ENCODE measurements at regions of chr1 and their contacts with region 1.

Region 1: DNA sequence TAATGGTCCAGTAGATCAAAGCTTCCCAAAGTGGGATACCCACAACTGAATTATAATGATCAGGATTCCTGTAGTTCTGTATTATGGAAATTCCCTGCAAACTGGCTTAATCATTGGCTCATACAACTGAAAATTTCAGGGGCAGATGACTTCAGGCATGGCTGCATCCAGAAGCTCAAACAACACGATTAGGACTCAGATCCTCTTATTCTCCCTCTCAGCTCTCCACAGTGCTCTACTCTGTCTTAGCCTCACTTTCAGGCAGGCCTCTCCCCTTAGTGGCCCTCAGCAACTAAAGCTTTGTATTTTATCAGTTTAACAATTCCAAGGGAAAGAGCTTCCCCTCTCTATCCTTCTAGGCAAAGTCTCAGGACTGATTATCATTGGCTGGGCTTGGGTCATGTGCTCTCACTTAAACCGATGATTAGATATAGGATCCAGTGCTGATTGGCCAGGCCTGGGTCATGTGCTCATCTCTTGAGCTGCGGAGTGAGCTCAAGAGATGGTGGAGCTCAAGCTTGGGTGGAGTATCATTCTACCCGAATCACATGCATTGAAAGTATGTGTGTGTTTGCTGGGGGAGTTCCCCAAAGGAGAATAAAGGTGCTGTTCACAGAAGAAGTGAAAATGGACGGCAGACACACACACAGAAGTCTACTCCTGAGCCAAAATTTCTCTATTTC is 57.9 kb upstream of the RUNX3 start:
- DNase-seq: no peak
- ATAC-seq: no peak
- H3K4me3 Mint-ChIP-seq: no peak overlapping the region
- H3K27ac Mint-ChIP-seq: peak overlapping the region; percentile 31
- H3K4me1 Mint-ChIP-seq: peaks cover 98% of the 10 kb centered on the region
- H3K27me3 Mint-ChIP-seq: no peaks in the 10 kb centered on the region

Region 2: GRCh38 chr1:24793447-24794131 is 194.4 kb before region 1 on chr1:
- CTCF ChIA-PET with region 1: no interaction called
- POLR2A ChIA-PET with region 1: no interaction called
- DNase-seq: no peak
- ATAC-seq: no peak
- H3K4me3 Mint-ChIP-seq: no peak overlapping the region
- H3K27ac Mint-ChIP-seq: no peak overlapping the region
- H3K4me1 Mint-ChIP-seq: no peaks in the 10 kb centered on the region
- H3K27me3 Mint-ChIP-seq: peaks cover 7% of the 10 kb centered on the region

Region 3: DNA sequence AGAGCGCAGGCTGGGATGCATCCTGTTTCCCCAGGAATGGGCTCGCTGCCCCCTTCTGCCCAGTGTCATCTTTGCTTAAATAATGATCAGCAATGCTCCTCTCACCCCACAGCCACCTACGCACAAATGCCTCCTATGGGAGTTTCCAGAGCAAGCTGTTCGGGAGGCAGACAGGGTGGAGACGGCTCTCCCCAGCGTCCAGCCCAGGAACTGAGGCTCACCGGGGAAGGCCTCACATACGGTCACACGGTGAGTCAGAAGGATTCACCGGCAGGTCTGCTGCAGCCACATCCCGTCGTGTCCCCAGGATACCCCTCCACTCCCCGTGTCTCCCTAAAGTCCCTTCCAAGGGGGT is 17.6 kb before region 1 on chr1:
- CTCF ChIA-PET with region 1: interaction called, 77 read pairs
- POLR2A ChIA-PET with region 1: interaction called, 106 read pairs
- DNase-seq: no peak
- ATAC-seq: no peak
- H3K4me3 Mint-ChIP-seq: peak overlapping the region; percentile 66
- H3K27ac Mint-ChIP-seq: peak overlapping the region; percentile 90
- H3K4me1 Mint-ChIP-seq: peaks cover 87% of the 10 kb centered on the region
- H3K27me3 Mint-ChIP-seq: no peaks in the 10 kb centered on the region

Region 4: DNA sequence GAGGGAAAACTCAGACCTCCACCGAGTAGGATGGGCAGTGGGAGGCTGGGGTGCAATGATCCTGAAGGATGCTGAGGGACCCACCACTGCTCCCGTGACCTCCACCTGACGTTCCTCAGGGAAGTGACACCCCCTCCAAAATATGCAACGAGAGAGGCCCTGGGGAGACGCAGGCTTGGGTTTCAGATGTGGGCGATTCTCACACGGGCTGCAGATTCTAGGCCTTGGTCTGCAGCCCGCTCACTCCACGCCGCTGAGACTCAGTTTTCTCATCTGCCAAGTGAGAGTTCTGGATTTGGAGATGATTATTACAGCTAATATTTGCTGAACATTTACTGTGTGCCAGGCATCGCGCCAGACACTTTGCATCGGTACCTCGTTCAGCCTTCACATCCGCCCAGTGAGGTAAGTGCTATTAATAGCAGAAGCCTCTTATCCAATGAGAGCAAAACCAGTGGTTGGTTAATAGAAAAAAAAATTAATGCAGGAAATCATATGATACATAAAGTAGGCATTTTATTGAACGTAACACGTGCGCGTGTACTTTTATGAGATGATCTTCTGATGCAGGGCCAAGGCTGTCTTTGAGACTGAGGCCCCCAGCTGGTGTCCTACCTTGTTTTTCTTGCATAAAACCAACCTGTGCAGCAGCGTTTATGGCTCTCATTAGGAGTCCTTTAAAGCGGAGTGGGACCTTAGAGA is 44.1 kb after region 1 on chr1:
- CTCF ChIA-PET with region 1: interaction called, 136 read pairs
- POLR2A ChIA-PET with region 1: interaction called, 9 read pairs
- DNase-seq: peak; percentile 82
- ATAC-seq: peak; percentile 32
- H3K4me3 Mint-ChIP-seq: peak overlapping the region; percentile 65
- H3K27ac Mint-ChIP-seq: no peak overlapping the region
- H3K4me1 Mint-ChIP-seq: peaks cover 39% of the 10 kb centered on the region
- H3K27me3 Mint-ChIP-seq: no peaks in the 10 kb centered on the region

Region 5: GRCh38 chr1:25117233-25117823 is 129.3 kb after region 1 on chr1:
- CTCF ChIA-PET with region 1: no interaction called
- POLR2A ChIA-PET with region 1: no interaction called
- DNase-seq: peak; percentile 39
- ATAC-seq: no peak
- H3K4me3 Mint-ChIP-seq: no peak overlapping the region
- H3K27ac Mint-ChIP-seq: no peak overlapping the region
- H3K4me1 Mint-ChIP-seq: peaks cover 25% of the 10 kb centered on the region
- H3K27me3 Mint-ChIP-seq: peaks cover 20% of the 10 kb centered on the region